Activated B cell treated with CpG ODN at 0.5 μM for 24 hours (primary cell): ENCODE measurements at regions of chr13 and their contacts with region 1.

Region 1: GRCh38 chr13:32315238-32316027 is at the starts of genes BRCA2 and ZAR1L:
- DNase-seq: peak; percentile 80
- ATAC-seq: peak; percentile 88
- H3K4me3 Mint-ChIP-seq: peak within 1 kb of the TSS; percentile 94
- H3K27ac Mint-ChIP-seq: peak within 1 kb of the TSS; percentile 100
- H3K4me1 Mint-ChIP-seq: peaks cover 14% of the 10 kb centered on the region
- H3K27me3 Mint-ChIP-seq: no peaks in the 10 kb centered on the region
- CTCF ChIP-seq: no peak
- total RNA-seq, gene BRCA2: 4.5 and 6.6 TPM in 2 replicates
- total RNA-seq, gene ZAR1L: not detected in 2 replicates

Region 2: GRCh38 chr13:31199849-31200636 is 1115.4 kb before region 1 on chr13 and contains the start of gene B3GLCT:
- CTCF ChIA-PET with region 1: no interaction called
- POLR2A ChIA-PET with region 1: no interaction called
- intact Hi-C with region 1: loop called (anchors 10 kb)
- DNase-seq: peak; percentile 87
- ATAC-seq: peak; percentile 83
- H3K4me3 Mint-ChIP-seq: peak within 1 kb of the TSS; percentile 84
- H3K27ac Mint-ChIP-seq: peak within 1 kb of the TSS; percentile 84
- H3K4me1 Mint-ChIP-seq: peaks cover 18% of the 10 kb centered on the region
- H3K27me3 Mint-ChIP-seq: no peaks in the 10 kb centered on the region
- CTCF ChIP-seq: peak; percentile 63
- total RNA-seq, gene B3GLCT: 2.9 and 3.0 TPM in 2 replicates

Region 3: DNA sequence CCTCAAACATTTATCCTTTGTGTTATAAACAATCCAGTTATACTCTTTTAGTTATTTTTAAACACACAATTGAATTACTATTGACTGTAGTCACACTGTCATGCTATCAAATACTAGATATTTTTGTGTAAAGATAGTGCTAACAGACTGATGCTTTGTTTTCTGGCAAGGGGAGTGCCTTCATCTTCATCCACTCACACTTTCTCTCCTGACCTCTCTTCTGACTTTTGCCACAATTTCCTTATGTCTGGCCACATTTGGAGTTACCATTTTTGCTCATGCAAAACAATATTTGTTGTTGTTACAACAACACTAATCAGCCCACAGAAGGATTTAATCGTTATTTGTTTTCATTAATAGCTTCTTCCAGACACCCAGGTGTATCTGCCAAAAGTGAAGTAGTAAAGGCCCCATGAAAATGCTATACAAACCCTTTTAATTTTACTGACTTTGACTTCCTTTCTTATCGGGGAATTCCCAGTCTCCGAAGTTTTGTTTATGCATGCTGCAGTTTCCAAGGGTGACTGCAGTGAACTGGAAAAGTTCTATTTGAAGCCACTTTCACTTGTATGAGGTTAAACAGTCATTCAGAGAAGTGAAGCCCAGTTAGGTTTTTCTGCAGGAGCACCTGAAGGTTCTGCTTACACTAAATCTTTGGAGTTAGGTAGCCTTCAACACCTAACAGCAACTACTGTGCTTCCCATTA is 349.9 kb before region 1 on chr13:
- CTCF ChIA-PET with region 1: no interaction called
- POLR2A ChIA-PET with region 1: interaction called, 4 read pairs
- intact Hi-C with region 1: loop called (anchors 2 kb)
- DNase-seq: no peak
- ATAC-seq: peak; percentile 89
- H3K4me3 Mint-ChIP-seq: peak overlapping the region; percentile 30
- H3K27ac Mint-ChIP-seq: peak overlapping the region; percentile 91
- H3K4me1 Mint-ChIP-seq: peaks cover 46% of the 10 kb centered on the region
- H3K27me3 Mint-ChIP-seq: no peaks in the 10 kb centered on the region
- CTCF ChIP-seq: no peak

Region 4: DNA sequence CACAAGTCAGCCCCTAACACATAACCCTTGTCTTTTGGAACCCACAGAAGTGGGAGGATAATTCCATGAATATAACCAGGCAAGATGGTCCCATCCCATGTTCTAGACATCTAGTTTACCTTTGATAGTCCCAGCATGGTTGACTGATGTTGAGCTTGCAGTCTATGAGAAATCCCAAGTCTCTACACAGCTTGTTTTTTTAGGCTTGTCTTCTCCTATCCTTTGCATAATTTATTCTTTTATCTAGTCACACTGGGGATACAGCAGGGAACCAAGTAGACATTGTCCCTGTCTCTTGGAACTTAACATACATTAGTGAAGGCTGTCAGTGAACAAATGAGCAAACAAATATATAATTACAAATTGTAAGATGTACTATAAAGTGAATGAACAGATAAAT is 303.5 kb before region 1 on chr13:
- CTCF ChIA-PET with region 1: no interaction called
- POLR2A ChIA-PET with region 1: no interaction called
- intact Hi-C with region 1: no loop called
- DNase-seq: no peak
- ATAC-seq: no peak
- H3K4me3 Mint-ChIP-seq: no peak overlapping the region
- H3K27ac Mint-ChIP-seq: no peak overlapping the region
- H3K4me1 Mint-ChIP-seq: no peaks in the 10 kb centered on the region
- H3K27me3 Mint-ChIP-seq: no peaks in the 10 kb centered on the region
- CTCF ChIP-seq: no peak

Region 5: GRCh38 chr13:32427852-32428580 is 112.6 kb after region 1 on chr13 and contains the start of gene N4BP2L1:
- CTCF ChIA-PET with region 1: interaction called, 4 read pairs
- POLR2A ChIA-PET with region 1: interaction called, 64 read pairs
- intact Hi-C with region 1: loop called (anchors 1 kb)
- DNase-seq: peak; percentile 77
- ATAC-seq: peak; percentile 73
- H3K4me3 Mint-ChIP-seq: peak within 1 kb of the TSS; percentile 95
- H3K27ac Mint-ChIP-seq: peak within 1 kb of the TSS; percentile 99
- H3K4me1 Mint-ChIP-seq: peaks cover 48% of the 10 kb centered on the region
- H3K27me3 Mint-ChIP-seq: no peaks in the 10 kb centered on the region
- CTCF ChIP-seq: no peak
- total RNA-seq, gene N4BP2L1: 23.0 and 24.3 TPM in 2 replicates

Region 6: DNA sequence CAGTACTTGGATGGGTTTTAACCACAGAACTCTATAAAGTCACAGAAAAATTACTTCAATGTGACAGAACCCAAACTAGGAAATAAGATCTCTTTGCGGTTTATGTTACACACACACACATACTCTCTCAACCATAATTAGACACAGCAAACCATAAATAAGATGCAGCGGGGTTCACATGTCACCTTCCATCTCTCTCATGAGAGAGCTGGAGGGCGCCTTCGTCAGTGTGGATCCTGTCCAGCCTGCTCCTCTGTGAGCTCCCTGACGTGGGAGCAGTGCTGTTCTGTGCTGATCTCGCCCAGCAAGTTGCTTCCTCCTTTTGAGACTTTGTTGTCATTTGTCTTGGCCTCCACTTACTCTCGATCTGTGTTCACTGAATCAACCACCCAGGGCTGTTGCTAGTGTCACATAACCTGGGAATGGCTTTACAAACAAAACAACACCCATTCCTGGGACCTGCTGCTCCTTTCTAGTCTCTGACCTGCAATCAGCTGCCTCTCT is 495.9 kb after region 1 on chr13:
- CTCF ChIA-PET with region 1: no interaction called
- POLR2A ChIA-PET with region 1: no interaction called
- intact Hi-C with region 1: no loop called
- DNase-seq: no peak
- ATAC-seq: no peak
- H3K4me3 Mint-ChIP-seq: peak overlapping the region; percentile 48
- H3K27ac Mint-ChIP-seq: no peak overlapping the region
- H3K4me1 Mint-ChIP-seq: peaks cover 7% of the 10 kb centered on the region
- H3K27me3 Mint-ChIP-seq: peaks cover 3% of the 10 kb centered on the region
- CTCF ChIP-seq: no peak

Region 7: DNA sequence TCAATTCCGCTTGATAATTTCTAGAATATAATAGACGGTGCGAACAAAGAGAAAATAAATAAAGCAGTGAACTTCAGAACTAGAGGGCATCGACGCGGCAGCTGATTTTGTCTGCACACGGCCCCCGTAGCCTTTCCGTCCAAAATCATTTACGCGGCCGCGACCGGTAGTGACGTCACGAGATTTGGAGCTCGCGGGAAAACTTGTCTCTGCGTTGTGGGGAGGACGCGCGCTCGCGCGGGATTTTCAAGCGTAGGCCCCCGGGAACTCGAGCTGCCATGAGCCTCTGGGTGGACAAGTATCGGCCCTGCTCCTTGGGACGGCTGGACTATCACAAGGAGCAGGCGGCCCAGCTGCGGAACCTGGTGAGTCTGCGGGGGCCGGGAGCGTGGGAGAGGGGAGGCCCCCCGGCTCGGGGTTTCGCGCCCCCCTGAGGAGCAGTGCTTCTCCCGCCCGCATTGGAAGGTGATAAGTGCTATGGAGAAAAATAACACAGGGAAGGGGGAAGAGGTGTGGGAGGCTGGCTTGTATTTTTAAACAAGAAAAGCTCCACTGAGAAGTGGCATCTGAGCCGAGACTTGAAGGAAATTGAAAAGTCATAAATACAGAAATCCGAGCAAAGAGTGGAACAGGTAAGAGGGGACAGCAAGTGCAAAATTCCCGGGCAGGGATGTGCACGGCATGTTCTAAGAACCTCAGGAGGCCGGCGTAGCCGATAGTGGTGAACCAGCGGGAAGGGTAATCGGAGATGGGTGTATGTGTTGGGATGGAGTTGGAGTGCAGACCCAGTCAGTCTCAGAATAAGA is 1502.7 kb after region 1 on chr13 and contains the start of gene RFC3:
- CTCF ChIA-PET with region 1: no interaction called
- POLR2A ChIA-PET with region 1: no interaction called
- intact Hi-C with region 1: loop called (anchors 5 kb)
- DNase-seq: peak; percentile 84
- ATAC-seq: peak; percentile 94
- H3K4me3 Mint-ChIP-seq: peak within 1 kb of the TSS; percentile 93
- H3K27ac Mint-ChIP-seq: peak within 1 kb of the TSS; percentile 91
- H3K4me1 Mint-ChIP-seq: peaks cover 19% of the 10 kb centered on the region
- H3K27me3 Mint-ChIP-seq: peaks cover 5% of the 10 kb centered on the region
- CTCF ChIP-seq: no peak
- total RNA-seq, gene RFC3: 13.5 and 14.3 TPM in 2 replicates